Posterior cingulate gyrus (tissue), 11 donors: ENCODE measurements at regions of chr15 and their contacts with region 1.

Region 1: GRCh38 chr15:90387537-90388461 is at the start of gene IQGAP1:
- DNase-seq: peak; percentile 87 to 99 (median 94)

Region 2: DNA sequence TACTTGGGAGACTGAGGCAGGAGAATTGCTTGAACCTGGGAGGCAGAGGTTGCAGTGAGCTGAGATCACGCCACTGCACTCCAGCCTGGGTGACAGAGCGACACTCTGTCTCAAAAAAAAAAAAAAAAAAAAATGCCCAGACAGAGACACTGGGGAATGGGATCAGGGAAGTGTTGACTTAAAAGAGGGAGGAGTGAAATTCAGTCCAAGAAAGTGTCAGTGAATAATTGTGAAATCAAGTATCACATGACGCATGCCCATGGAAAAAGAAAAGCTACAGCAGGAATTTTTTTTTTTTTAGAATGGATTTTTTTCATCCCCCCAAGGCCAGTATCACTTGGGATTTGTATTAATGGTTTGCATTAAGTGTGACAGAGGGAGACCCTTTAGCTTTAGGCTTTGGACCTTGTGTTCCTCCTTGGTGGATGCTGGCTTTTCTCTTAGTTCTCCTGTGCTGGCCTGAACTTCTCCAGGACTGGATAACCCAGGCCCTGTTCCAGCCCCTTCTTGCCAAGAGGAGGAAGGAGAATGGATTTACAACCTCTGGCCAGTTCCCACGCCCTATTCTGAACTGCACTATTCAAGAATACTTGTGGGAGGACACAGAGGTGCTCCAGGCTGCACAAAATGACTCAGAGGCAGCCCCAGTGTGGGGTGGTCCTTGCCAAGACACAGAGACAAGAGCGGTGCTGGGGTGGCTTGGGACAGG is 72.4 kb before region 1 on chr15:
- intact Hi-C with region 1: no loop called
- DNase-seq: peak in 2 of 10 donors; percentile 16 to 34

Region 3: DNA sequence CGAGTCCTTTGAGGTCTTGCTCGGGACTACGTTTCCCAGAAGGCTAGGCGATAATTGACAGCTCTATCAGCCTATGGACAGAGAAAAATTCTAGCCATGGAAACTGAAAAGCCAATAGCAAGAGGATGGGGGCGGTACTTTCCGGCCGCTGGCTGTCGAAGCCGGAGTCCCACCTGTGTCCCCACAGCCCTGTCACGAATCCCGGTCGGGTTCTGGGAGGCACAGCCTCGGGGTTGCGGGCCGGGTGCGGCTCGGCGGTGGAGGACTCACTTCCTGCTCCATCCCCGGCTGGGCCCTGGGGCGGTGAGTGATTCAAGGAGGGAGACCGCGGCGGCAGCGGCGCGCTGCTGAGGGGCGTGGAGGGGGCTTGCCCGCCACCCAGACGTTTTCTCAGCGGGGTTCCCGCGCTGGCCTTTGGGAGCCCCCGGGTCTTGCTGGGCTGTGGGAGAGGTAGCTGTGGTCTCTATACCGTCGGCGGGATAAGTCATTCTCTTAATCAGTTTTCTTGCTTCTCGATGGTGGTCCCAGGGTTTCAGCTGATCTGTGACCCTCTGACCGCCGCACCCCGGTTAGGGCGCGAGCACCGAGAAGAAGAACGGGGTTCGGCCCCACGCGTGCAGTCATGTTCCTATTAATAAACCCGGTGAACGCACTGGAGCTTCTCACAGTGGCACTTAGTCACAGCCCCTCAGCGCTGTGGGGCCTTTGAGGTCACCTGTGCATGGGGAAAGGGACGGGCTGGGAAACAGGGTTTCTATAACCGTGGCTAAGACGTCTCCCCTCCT is 35.5 kb before region 1 on chr15 and contains the start of gene ZNF774:
- intact Hi-C with region 1: loop called (anchors 5 kb)
- DNase-seq: peak; percentile 77 to 98 (median 88)

Region 4: GRCh38 chr15:90459368-90459767 is 71.6 kb after region 1 on chr15:
- intact Hi-C with region 1: loop called (anchors 2 kb)
- DNase-seq: no peak